ENCODE measurements at regions of chr6 and their contacts with region 1.

Region 1: DNA sequence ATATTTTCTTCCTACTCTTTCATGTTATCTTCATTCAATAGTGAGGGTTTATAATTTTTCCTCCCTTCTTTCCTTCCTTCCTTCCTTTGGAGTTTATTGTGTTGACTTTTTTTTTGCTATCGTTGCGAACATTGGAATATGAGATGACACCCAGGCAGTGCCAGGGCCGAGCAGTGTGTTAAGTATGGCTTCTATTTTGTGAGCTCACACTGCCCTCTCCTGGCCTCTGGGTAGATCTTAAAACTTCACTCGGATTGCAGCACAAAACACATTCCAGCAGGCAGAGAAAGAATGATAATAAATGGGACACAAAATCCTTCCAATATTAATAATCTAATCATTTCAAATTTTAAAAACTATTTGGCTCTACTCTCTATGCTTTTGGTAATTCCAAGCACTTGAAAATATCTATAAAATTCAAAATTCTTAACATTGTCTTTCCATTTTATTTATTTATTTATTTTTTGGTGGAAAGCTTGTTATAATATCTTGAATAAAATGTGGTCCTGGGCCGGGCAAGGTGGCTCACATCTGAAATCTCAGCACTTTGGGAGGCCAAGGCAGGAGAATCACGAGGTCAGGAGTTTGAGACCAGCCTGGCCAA is 147.4 kb upstream of the OLIG3 start:
- DNase-seq: peak; percentile 45 to 89 (median 74)
- H3K4me3 ChIP-seq: no peak overlapping the region
- H3K27ac ChIP-seq: peak overlapping the region in 14 of 59 donors; percentile 3 to 57 (median 38)
- H3K27me3 ChIP-seq: no peaks in the 10 kb centered on the region
- CTCF ChIP-seq: peak; percentile 51 to 92 (median 82)

Region 2: DNA sequence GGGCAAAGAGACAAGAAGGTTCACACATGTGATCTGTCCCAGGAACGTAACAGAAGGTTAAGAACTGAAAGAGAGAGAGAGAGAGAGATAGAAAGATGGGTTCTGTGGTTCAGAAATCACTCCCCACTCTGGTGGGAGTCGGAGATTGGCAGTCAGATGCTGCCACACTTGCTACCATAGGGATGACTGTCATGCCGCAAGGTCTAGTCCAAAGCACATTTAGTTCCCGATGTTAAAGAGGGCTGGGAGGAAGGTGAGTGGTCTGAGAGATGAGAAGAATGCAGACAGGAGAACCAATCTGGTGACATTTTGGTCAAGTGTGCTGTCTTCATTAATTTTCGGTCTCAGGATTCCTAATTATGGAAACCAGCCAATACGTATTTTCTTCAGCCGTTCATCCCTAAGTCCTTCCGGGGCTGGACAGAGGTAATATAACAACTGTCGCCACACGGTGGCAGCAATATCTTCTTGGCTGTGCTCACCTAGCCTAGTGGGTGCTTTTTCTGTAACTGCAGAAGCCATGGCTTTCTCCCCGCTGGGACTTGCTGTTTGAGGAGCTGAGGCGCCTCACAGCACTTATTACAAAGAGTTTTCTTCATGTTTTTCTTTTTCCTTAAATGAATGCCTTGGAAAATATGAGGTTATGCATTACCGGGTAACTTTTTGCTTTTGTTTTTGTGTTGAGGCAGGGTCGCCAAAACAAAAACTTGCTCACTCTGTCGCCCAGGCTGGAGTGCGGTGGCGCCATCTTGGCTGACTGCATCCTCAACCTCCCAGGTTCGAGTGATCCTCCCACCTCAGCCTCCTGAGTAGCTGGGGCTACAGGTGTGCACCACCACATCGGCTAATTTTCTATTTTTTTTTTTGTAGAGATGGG is 673.5 kb before region 1 on chr6:
- intact Hi-C with region 1: loop called in 1 of 2 experiments (anchors 10 kb)
- DNase-seq: peak in 9 of 10 donors; percentile 30 to 73 (median 59)
- H3K4me3 ChIP-seq: no peak overlapping the region
- H3K27ac ChIP-seq: no peak overlapping the region
- H3K27me3 ChIP-seq: peaks cover 0 to 12% (median 0%) of the 10 kb centered on the region in 45 donors
- CTCF ChIP-seq: peak; percentile 35 to 76 (median 60)

Region 3: DNA sequence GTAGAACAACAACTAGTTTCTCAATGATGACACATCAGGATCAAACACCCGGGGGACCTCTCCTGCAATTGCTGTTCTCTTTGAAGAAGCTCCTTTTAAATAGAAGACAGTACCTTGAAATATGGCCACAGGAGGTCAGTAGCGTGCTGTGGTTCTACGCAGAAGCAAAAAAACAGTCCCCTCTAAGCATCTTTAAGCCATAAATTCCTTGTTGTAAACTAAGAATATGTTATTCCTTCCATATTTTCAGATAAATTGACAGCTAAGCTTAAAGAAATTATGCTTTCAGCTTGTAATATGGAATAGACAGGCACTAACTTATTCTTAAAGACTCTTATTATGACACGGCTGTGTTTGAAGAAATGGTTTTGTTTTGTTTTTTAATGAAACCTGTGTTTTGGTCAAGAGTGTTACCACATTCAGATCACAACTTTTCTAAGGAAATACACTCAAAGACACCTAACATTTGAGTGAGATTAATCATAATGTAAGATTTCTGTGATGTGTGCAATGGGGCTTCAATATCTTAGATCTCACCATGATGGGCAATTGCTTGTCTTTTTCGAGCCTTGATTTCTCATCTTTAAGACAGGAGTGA is 547.1 kb before region 1 on chr6:
- intact Hi-C with region 1: loop called (anchors 5 kb)
- DNase-seq: peak in 4 of 10 donors; percentile 21 to 60 (median 44)
- H3K4me3 ChIP-seq: peak overlapping the region in 6 of 59 donors; percentile 3 to 24 (median 12)
- H3K27ac ChIP-seq: peak overlapping the region in 22 of 59 donors; percentile 3 to 68 (median 51)
- H3K27me3 ChIP-seq: no peaks in the 10 kb centered on the region
- CTCF ChIP-seq: peak; percentile 54 to 90 (median 76)

Region 4: GRCh38 chr6:137271245-137272183 is 370.1 kb before region 1 on chr6:
- intact Hi-C with region 1: loop called (anchors 1 to 2 kb)
- DNase-seq: no peak
- H3K4me3 ChIP-seq: no peak overlapping the region
- H3K27ac ChIP-seq: no peak overlapping the region
- H3K27me3 ChIP-seq: peaks cover 0 to 4% (median 0%) of the 10 kb centered on the region in 45 donors
- CTCF ChIP-seq: peak; percentile 71 to 97 (median 89)

Region 5: DNA sequence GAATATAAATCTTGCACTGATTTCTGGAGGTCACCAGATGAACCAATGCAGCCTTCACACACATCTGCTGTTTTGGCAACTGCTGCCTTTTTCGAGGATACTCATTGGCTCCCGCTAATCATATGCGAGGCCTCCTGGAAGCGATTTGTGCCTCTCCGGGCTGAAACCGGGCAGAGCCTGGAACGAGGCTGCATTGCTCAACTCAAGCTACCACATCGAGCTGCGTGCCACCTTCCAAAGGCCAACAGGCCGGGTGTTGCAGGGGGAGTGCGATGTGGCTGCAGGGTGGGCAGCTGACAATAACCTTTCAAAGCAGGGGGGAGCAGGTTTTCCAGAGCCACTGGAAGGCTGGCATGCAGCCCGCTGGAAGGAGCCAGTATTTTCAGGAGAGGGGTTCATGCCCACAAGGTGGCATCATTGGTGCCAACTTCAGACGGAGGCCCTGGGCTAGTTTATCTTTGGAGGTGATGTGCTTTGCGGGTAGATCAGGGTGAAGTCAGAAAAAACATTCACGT is 299.8 kb before region 1 on chr6:
- intact Hi-C with region 1: loop called in 1 of 2 experiments (anchors 10 kb)
- DNase-seq: peak; percentile 35 to 83 (median 70)
- H3K4me3 ChIP-seq: peak overlapping the region in 29 of 59 donors; percentile 1 to 53 (median 22)
- H3K27ac ChIP-seq: peak overlapping the region in 58 of 59 donors; percentile 42 to 99 (median 80)
- H3K27me3 ChIP-seq: peaks cover 0 to 14% (median 0%) of the 10 kb centered on the region in 45 donors
- CTCF ChIP-seq: peak in 53 of 56 donors; percentile 24 to 75 (median 50)

Region 6: GRCh38 chr6:137512757-137513605 is 128.6 kb before region 1 on chr6:
- intact Hi-C with region 1: no loop called
- DNase-seq: no peak
- H3K4me3 ChIP-seq: no peak overlapping the region
- H3K27ac ChIP-seq: no peak overlapping the region
- H3K27me3 ChIP-seq: peaks cover 5 to 78% (median 51%) of the 10 kb centered on the region in 45 donors
- CTCF ChIP-seq: no peak

Measured in dorsolateral prefrontal cortex (tissue), 120 donors.